AG04450 (cell line): ENCODE measurements at regions of chr14 and their contacts with region 1.

Region 1: GRCh38 chr14:77067632-77068514 is 30.2 kb upstream of the CIPC start:
- DNase-seq: peak; percentile 30
- H3K4me3 ChIP-seq: no peak overlapping the region
- H3K27ac ChIP-seq: no peak overlapping the region
- H3K27me3 ChIP-seq: no peaks in the 10 kb centered on the region
- CTCF ChIP-seq: peak; percentile 90

Region 2: GRCh38 chr14:76832503-76832988 is 235.3 kb before region 1 on chr14:
- CTCF ChIA-PET with region 1: no interaction called
- POLR2A ChIA-PET with region 1: no interaction called
- DNase-seq: no peak
- H3K4me3 ChIP-seq: no peak overlapping the region
- H3K27ac ChIP-seq: no peak overlapping the region
- H3K27me3 ChIP-seq: peaks cover 33% of the 10 kb centered on the region
- CTCF ChIP-seq: no peak

Region 3: GRCh38 chr14:76904740-76905438 is 163.0 kb before region 1 on chr14:
- CTCF ChIA-PET with region 1: interaction called, 195 read pairs
- POLR2A ChIA-PET with region 1: interaction called, 10 read pairs
- DNase-seq: peak; percentile 92
- H3K4me3 ChIP-seq: peak overlapping the region; percentile 42
- H3K27ac ChIP-seq: peak overlapping the region; percentile 99
- H3K27me3 ChIP-seq: no peaks in the 10 kb centered on the region
- CTCF ChIP-seq: no peak

Region 4: GRCh38 chr14:77023001-77023996 is 44.6 kb before region 1 on chr14:
- CTCF ChIA-PET with region 1: interaction called, 19 read pairs
- POLR2A ChIA-PET with region 1: interaction called, 5 read pairs
- DNase-seq: no peak
- H3K4me3 ChIP-seq: peak overlapping the region; percentile 94
- H3K27ac ChIP-seq: peak overlapping the region; percentile 39
- H3K27me3 ChIP-seq: no peaks in the 10 kb centered on the region
- CTCF ChIP-seq: peak; percentile 53

Region 5: GRCh38 chr14:77086017-77086736 is 18.3 kb after region 1 on chr14:
- CTCF ChIA-PET with region 1: interaction called, 98 read pairs
- POLR2A ChIA-PET with region 1: no interaction called
- DNase-seq: no peak
- H3K4me3 ChIP-seq: no peak overlapping the region
- H3K27ac ChIP-seq: no peak overlapping the region
- H3K27me3 ChIP-seq: peaks cover 17% of the 10 kb centered on the region
- CTCF ChIP-seq: no peak

Region 6: GRCh38 chr14:77111043-77111442 is 43.2 kb after region 1 on chr14:
- CTCF ChIA-PET with region 1: no interaction called
- POLR2A ChIA-PET with region 1: no interaction called
- DNase-seq: no peak
- H3K4me3 ChIP-seq: no peak overlapping the region
- H3K27ac ChIP-seq: no peak overlapping the region
- H3K27me3 ChIP-seq: no peaks in the 10 kb centered on the region
- CTCF ChIP-seq: no peak